ENCODE measurements at regions of chr19 and their contacts with region 1.

Region 1: DNA sequence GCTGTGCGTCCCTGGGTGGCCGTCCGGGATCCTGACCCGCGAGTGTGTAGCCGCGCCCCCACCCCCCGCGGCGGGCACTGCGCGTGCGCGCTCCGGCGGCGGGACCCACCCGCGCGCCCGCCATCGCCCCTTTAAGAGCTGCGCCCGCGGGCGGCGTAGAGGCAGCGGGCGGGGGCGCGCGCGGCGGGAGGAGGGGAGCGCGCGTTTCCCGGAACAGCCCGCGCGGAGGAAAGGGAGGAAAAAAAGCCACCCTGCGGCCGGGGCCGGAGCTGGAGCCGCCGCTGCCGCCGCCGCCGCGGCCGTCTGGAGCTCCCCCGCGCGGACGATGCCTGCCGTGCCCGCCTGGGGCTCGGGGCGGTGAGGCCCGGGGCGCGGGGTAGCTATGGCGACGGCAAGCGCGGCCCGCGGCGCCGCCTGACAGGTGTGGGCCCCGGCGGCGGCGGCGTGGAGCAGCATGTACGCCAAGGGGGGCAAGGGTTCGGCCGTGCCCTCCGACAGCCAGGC is at the start of gene SSBP4:
- DNase-seq: peak; percentile 74 to 88 (median 84)
- ATAC-seq: peak in 2 of 4 donors; percentile 10 to 22
- H3K4me3 ChIP-seq: peak within 1 kb of the TSS; percentile 52 to 99 (median 80)
- H3K27ac ChIP-seq: peak within 1 kb of the TSS; percentile 89 to 100 (median 95)
- H3K4me1 ChIP-seq: peaks cover 8 to 90% (median 69%) of the 10 kb centered on the region in 12 donors
- H3K27me3 ChIP-seq: peaks cover 0 to 22% (median 0%) of the 10 kb centered on the region in 9 donors
- CTCF ChIP-seq: peak in 8 of 12 donors; percentile 14 to 69 (median 45)
- POLR2A ChIP-seq: peak in 1 of 2 donors; percentile 50
- total RNA-seq, gene SSBP4: 23.5 to 89.8 (median 29.4) TPM

Region 2: DNA sequence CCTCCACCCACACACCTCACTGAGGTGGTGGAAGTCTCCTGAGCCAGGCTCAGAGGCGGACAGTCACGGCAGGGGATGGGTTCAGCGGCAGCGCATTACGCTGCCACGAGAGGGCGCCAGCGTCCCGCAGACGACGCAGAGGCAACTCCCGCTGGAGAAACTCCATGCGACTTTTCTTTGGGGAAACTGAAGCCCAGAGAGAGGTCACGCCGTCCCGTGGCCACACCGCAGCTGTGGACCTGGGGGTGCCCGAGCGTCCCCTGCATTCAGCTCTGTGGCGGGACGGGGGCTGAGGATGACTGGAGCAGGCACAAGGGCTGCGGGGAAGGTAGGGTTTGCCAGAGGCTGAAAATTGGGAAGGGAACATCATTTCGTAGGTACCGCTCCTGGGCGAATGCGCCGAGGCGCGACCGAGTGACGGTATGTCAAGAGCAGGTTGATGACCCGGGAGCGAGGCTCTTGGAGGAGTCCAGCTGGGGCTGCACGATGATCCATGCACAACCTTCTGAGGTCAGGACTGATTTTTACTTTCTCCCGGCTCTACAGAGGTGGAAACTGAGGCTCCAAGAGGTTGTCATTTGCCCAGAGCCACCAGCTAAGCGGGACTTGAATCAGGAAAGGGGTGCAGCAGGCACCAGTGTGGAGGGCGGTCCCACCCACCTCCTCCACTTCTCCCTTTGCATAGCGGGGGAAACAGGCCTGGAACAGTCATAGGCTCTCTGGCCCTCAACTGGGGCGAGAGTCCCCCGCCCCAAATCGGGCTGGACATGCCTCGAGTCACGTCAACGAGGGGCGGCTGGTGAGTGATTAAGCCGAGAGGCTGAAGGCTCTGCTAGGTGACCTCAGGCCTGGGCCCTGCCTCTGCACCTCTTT is 412.0 kb before region 1 on chr19:
- intact Hi-C with region 1: loop called in 1 of 10 experiments (anchors 10 kb)
- DNase-seq: peak; percentile 80 to 93 (median 84)
- ATAC-seq: peak; percentile 73 to 93 (median 86)
- H3K4me3 ChIP-seq: peak overlapping the region; percentile 47 to 84 (median 61)
- H3K27ac ChIP-seq: peak overlapping the region; percentile 79 to 93 (median 86)
- H3K4me1 ChIP-seq: peaks cover 0 to 47% (median 20%) of the 10 kb centered on the region in 12 donors
- H3K27me3 ChIP-seq: peaks cover 0 to 1% (median 0%) of the 10 kb centered on the region in 9 donors
- CTCF ChIP-seq: peak; percentile 95 to 99 (median 99)
- POLR2A ChIP-seq: peak in 1 of 2 donors; percentile 53

Region 3: DNA sequence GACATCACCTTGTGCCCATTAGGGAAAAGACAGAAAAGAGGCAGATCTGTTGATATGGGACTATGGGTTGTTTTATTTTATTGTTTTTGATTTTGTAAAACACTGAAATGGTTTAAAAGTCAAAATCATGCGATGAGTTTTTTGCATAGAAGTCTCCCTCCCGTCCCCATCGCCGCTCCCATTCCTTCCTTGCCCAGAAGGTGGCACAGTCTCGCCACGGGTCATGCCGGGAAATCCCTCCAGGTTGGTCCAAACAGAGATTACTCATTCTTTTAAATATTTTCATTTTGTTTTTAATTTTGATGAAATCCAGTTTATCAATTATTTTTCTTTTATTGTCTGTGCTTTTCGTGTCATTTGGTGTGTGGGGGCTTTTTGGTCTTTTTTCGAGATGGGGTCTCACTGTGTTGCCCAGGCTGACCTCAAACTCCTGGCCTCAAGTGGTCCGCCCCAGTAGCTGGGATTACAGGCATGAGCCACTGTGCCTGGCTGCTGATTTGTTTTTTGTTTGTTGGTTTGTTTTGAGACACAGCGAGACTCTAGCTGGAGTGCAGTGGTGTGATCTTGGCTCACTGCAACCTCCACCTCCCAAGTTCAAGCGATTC is 69.6 kb before region 1 on chr19:
- intact Hi-C with region 1: loop called in 1 of 10 experiments (anchors 5 kb)
- DNase-seq: peak in 4 of 5 donors; percentile 45 to 59 (median 46)
- ATAC-seq: peak in 2 of 4 donors; percentile 64 to 67
- H3K4me3 ChIP-seq: no peak overlapping the region
- H3K27ac ChIP-seq: no peak overlapping the region
- H3K4me1 ChIP-seq: peaks cover 0 to 3% (median 0%) of the 10 kb centered on the region in 12 donors
- H3K27me3 ChIP-seq: no peaks in the 10 kb centered on the region
- CTCF ChIP-seq: peak; percentile 63 to 83 (median 71)
- POLR2A ChIP-seq: no peak